ENCODE measurements at regions of chr7 and their contacts with region 1.

Region 1: DNA sequence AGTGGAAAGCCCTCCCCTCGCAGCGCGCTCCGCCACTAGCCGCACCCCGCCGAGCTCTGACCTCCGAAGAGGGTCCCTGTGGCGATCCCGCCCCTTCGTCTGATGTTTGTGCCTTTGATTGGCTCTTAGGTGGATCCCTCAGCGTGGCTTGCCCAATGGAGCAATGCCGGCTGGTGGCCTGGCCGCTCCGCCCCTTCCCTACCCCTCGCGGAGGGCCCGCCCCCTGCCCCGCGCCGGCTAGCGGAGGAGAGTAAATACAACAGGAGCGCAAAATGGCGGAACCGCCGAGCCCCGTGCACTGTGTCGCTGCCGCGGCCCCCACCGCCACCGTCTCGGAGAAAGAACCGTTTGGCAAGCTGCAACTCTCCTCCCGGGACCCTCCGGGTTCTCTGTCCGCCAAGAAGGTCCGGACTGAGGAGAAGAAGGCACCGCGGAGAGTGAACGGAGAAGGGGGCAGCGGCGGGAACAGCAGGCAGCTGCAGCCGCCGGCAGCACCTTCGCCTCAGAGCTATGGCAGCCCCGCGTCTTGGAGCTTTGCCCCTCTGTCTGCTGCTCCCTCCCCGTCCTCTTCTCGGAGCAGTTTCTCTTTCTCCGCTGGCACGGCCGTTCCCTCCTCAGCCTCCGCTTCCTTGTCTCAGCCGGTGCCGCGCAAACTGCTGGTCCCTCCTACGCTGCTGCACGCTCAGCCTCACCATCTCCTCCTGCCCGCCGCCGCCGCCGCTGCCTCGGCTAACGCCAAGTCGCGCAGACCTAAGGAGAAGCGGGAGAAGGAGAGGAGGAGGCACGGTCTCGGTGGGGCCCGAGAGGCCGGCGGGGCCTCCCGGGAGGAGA is at the start of gene RSBN1L:
- DNase-seq: peak; percentile 99
- H3K4me3 ChIP-seq: peak within 1 kb of the TSS; percentile 75 to 96
- H3K27ac ChIP-seq: peak within 1 kb of the TSS; percentile 85 to 91
- H3K4me1 ChIP-seq: peaks cover 3 to 10% of the 10 kb centered on the region in 2 experiments; a peak in 3 of 4 replicates
- H3K27me3 ChIP-seq: no peaks in the 10 kb centered on the region
- CTCF ChIP-seq: peak; percentile 47
- EP300 ChIP-seq: no peak; a peak in 1 of 4 replicates
- RAD21 ChIP-seq: no peak
- polyA plus RNA-seq, gene RSBN1L: 5.6 and 6.5 TPM in 2 replicates

Region 2: DNA sequence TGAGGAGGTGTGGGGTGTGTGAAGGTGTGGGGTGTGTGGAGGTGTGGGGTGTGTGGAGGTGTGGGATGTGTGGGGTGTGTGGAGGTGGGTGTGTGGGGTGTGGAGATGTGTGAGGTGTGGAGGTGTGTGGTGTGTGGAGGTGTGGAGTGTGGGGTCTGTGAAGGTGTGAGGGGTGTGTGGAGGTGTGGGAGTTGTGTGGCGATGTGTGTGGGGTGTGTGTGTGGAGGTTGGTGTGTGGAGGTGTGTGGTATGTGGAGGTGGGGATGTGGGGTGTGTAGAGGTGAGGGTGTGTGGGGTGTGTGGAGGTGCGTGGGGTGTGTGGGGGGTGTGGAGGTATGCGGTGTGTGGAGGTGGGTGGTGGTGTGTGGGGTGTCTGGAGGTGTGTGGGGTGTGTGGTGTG is 699.0 kb before region 1 on chr7:
- CTCF ChIA-PET with region 1: no interaction called
- POLR2A ChIA-PET with region 1: no interaction called
- DNase-seq: peak; percentile 44
- H3K4me3 ChIP-seq: no peak overlapping the region
- H3K27ac ChIP-seq: no peak overlapping the region
- H3K4me1 ChIP-seq: no peaks in the 10 kb centered on the region; a peak in 1 of 4 replicates
- H3K27me3 ChIP-seq: no peaks in the 10 kb centered on the region
- CTCF ChIP-seq: no peak
- EP300 ChIP-seq: no peak
- RAD21 ChIP-seq: no peak

Region 3: DNA sequence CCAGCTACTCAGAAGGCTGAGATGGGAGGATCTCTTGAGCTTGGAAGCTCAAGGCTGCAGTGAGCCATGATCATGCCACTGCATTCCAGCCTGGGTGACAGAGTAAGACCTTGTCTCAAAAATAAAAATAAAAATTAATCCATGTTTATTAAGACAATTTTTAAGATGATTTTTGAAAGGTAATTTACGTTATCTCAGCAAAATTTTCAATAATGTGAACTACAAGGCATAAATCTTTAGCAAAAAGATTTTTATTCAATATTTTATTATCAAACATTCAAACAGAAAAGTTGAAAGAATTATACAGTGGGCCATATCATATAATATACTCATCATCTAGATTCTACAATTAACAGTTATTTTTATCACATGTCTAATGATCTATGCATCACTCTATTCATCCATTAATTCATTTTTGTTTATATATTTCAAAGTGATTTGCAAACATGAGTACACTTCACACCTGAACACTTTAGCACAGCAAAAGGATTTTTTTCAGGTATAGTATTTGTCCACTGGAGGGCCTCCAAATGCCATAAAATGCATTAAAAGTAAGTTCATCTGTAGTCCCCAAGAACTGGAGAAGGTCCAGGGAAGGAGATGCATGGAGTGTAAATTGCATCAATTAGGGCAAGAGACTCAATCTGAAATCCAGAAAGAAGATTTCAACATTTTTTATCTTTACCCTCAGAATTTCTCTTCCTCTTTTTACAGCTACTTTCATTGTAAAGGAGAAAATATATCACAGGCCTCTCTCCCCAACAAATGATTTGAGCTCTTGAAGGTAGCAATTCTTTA is 38.8 kb before region 1 on chr7:
- CTCF ChIA-PET with region 1: interaction called, 23 read pairs
- POLR2A ChIA-PET with region 1: interaction called, 3 read pairs
- DNase-seq: peak; percentile 64
- H3K4me3 ChIP-seq: no peak overlapping the region
- H3K27ac ChIP-seq: no peak overlapping the region
- H3K4me1 ChIP-seq: no peaks in the 10 kb centered on the region
- H3K27me3 ChIP-seq: no peaks in the 10 kb centered on the region
- CTCF ChIP-seq: peak; percentile 88
- EP300 ChIP-seq: no peak
- RAD21 ChIP-seq: peak; percentile 96

Region 4: GRCh38 chr7:77684030-77684429 is 12.4 kb before region 1 on chr7:
- CTCF ChIA-PET with region 1: interaction called, 7 read pairs
- POLR2A ChIA-PET with region 1: interaction called, 11 read pairs
- DNase-seq: no peak
- H3K4me3 ChIP-seq: no peak overlapping the region
- H3K27ac ChIP-seq: no peak overlapping the region
- H3K4me1 ChIP-seq: 0 out of 4 replicates have a peak, but pooled peaks cover 0 to 10% of the 10 kb centered on the region in 2 experiments
- H3K27me3 ChIP-seq: no peaks in the 10 kb centered on the region
- CTCF ChIP-seq: no peak
- EP300 ChIP-seq: no peak
- RAD21 ChIP-seq: no peak

Region 5: GRCh38 chr7:77710861-77711260 is 14.4 kb after region 1 on chr7:
- CTCF ChIA-PET with region 1: interaction called, 12 read pairs
- POLR2A ChIA-PET with region 1: no interaction called
- DNase-seq: no peak
- H3K4me3 ChIP-seq: no peak overlapping the region
- H3K27ac ChIP-seq: no peak overlapping the region; a peak in 1 of 4 replicates
- H3K4me1 ChIP-seq: peaks cover 2 to 5% of the 10 kb centered on the region in 2 experiments; a peak in 2 of 4 replicates
- H3K27me3 ChIP-seq: no peaks in the 10 kb centered on the region
- CTCF ChIP-seq: no peak
- EP300 ChIP-seq: no peak
- RAD21 ChIP-seq: no peak

Region 6: GRCh38 chr7:77727936-77728701 is 31.7 kb after region 1 on chr7:
- CTCF ChIA-PET with region 1: interaction called, 22 read pairs
- POLR2A ChIA-PET with region 1: interaction called, 5 read pairs
- DNase-seq: peak; percentile 51
- H3K4me3 ChIP-seq: peak overlapping the region in 1 of 2 experiments; percentile 20; a peak in 1 of 4 replicates
- H3K27ac ChIP-seq: peak overlapping the region; percentile 67
- H3K4me1 ChIP-seq: peaks cover 18 to 32% of the 10 kb centered on the region in 2 experiments
- H3K27me3 ChIP-seq: no peaks in the 10 kb centered on the region
- CTCF ChIP-seq: no peak
- EP300 ChIP-seq: no peak
- RAD21 ChIP-seq: no peak

Region 7: DNA sequence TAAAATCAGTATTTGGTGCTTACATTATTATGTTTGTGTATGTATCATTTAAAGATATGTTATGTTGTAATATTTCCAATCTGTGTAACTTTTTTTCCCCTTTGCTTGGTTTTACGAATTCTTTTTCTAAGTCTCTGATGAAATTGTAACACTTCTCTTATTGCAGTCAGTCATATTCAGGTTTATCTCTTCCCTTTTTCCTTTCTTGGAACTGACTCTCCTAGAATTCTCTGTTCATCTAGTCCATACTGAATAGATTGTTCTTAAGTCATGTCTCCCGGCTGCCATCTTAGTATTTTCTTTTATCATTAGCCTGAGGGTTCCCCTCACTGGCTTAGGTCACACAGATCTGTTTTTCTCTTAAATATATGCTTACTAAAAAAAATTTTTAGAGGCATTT is 146.8 kb after region 1 on chr7:
- CTCF ChIA-PET with region 1: no interaction called
- POLR2A ChIA-PET with region 1: no interaction called
- DNase-seq: no peak
- H3K4me3 ChIP-seq: no peak overlapping the region
- H3K27ac ChIP-seq: no peak overlapping the region
- H3K4me1 ChIP-seq: no peaks in the 10 kb centered on the region; a peak in 2 of 4 replicates
- H3K27me3 ChIP-seq: no peaks in the 10 kb centered on the region
- CTCF ChIP-seq: no peak
- EP300 ChIP-seq: no peak
- RAD21 ChIP-seq: no peak

Region 8: GRCh38 chr7:77855371-77856083 is 159.1 kb after region 1 on chr7:
- CTCF ChIA-PET with region 1: no interaction called
- POLR2A ChIA-PET with region 1: no interaction called
- DNase-seq: no peak
- H3K4me3 ChIP-seq: no peak overlapping the region
- H3K27ac ChIP-seq: no peak overlapping the region
- H3K4me1 ChIP-seq: no peaks in the 10 kb centered on the region
- H3K27me3 ChIP-seq: no peaks in the 10 kb centered on the region
- CTCF ChIP-seq: no peak
- EP300 ChIP-seq: no peak
- RAD21 ChIP-seq: no peak

Measured in SK-N-SH (cell line).